ENCODE measurements at regions of chr9 and their contacts with region 1.

Region 1: DNA sequence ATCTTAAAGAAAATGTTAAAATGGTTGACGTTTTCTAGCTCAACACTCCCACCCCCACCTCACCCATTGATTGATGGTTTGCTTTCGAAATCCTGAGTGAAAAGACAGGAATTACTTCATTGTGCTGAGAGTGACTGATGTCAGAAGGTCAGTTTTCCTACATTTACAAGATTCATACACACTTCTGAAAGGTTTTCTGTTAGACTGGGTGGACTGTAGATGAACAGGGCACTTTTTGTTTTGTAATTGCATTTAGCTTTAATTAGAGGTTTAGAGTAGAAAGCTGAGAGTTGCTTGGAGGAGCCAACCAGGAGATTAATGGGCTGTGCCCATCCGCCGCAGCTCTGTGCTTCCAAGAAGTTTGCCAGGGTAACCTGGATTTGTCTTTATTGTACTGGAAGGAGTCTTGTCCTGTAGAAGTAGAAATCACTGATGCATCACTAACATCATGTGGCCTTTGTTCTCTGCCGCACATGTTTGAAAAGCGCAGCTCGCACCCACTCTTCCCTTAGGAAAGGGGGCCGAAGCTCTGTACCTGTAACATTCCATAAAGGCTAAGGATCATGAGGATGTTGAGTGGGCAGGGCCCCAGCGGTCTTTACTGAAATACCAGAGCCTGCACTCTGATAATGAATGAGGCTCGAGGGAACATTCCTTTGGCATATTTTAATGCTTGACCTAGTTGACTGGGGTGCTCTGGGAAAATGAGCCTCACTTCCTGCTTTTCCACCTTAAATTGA is 267.7 kb upstream of the DMRT1 start:
- DNase-seq: no peak
- ATAC-seq: no peak
- H3K4me3 ChIP-seq: no peak overlapping the region
- H3K4me3 Mint-ChIP-seq: no peak overlapping the region
- H3K27ac ChIP-seq: no peak overlapping the region
- H3K27ac Mint-ChIP-seq: no peak overlapping the region
- H3K4me1 ChIP-seq: no peaks in the 10 kb centered on the region
- H3K4me1 Mint-ChIP-seq: no peaks in the 10 kb centered on the region
- H3K27me3 ChIP-seq: no peaks in the 10 kb centered on the region
- H3K27me3 Mint-ChIP-seq: peaks cover 5% of the 10 kb centered on the region
- CTCF ChIP-seq: no peak

Region 2: GRCh38 chr9:517993-518392 is 55.8 kb before region 1 on chr9:
- CTCF ChIA-PET with region 1: no interaction called
- POLR2A ChIA-PET with region 1: no interaction called
- intact Hi-C with region 1: loop called in 1 of 2 experiments (anchors 10 kb)
- DNase-seq: no peak
- ATAC-seq: no peak
- H3K4me3 ChIP-seq: no peak overlapping the region
- H3K4me3 Mint-ChIP-seq: peak overlapping the region; percentile 80
- H3K27ac ChIP-seq: no peak overlapping the region
- H3K27ac Mint-ChIP-seq: peak overlapping the region; percentile 91
- H3K4me1 ChIP-seq: peaks cover 31% of the 10 kb centered on the region
- H3K4me1 Mint-ChIP-seq: peaks cover 35% of the 10 kb centered on the region
- H3K27me3 ChIP-seq: no peaks in the 10 kb centered on the region
- H3K27me3 Mint-ChIP-seq: no peaks in the 10 kb centered on the region
- CTCF ChIP-seq: no peak

Region 3: DNA sequence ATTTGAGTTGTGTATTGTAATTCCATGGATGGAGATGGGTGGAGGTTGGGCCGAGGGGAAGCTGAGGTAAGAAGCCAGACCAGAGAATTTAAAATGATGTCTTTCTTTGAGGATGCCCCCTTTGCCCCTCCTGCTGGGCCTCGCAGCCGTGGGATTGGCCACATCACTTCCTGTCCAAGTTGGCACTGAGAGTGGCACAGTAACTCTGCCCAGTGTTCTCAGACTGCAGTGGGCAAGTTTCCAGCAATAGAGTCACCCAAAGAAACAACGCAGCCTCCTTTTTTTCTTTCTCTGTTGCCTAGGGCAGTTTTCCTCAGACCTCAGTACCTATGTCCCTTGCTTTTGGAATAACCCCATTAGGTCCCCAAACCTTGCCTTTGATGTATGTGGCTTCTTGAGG is 39.0 kb before region 1 on chr9:
- CTCF ChIA-PET with region 1: no interaction called
- POLR2A ChIA-PET with region 1: no interaction called
- intact Hi-C with region 1: no loop called
- DNase-seq: no peak
- ATAC-seq: no peak
- H3K4me3 ChIP-seq: no peak overlapping the region
- H3K4me3 Mint-ChIP-seq: no peak overlapping the region
- H3K27ac ChIP-seq: no peak overlapping the region
- H3K27ac Mint-ChIP-seq: no peak overlapping the region
- H3K4me1 ChIP-seq: peaks cover 6% of the 10 kb centered on the region
- H3K4me1 Mint-ChIP-seq: peaks cover 3% of the 10 kb centered on the region
- H3K27me3 ChIP-seq: no peaks in the 10 kb centered on the region
- H3K27me3 Mint-ChIP-seq: peaks cover 11% of the 10 kb centered on the region
- CTCF ChIP-seq: no peak

Region 4: DNA sequence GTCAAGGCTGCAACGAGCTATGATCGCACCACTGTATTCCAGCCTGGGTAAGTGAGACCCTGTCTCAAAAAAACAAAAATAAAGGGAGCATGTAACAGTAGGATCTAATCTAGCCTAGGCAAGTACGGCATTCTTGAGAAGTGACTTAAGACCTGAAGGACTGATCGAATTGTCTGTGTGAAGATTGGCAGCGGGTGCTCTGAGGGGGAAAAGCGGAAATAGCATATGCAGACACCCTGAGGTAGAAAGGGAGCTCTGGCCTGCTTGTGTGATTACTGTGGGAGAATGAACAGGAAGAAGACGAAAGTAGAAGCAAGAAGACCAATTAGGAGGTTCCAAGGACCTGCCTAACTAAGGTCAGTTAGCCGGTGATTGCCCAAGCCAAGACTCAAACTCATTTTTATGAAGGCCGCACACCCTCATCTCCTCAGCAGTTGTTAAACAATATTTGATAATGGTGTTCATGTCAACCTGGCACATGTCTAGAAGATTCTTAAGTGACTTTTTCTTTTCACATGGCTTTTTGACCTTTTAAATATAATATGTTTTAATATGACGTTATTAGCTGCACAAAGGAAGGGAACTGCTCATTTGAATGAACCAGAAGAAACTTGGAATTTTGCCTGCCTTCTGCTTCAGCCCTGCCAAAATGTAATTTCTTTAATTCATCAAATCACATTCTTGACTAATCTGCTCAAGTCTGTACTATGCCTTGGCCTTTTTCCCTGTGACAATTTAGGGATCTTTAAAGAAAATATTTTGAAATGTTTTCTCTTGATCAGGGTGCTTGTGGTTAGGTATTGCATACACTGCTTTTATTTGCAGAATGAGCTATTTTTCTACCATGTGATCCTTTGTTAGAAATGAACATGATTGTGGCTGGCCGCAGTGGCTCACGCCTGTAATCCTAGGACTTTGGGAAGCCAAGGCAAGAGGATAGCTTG is 21.6 kb before region 1 on chr9:
- CTCF ChIA-PET with region 1: no interaction called
- POLR2A ChIA-PET with region 1: no interaction called
- intact Hi-C with region 1: no loop called
- DNase-seq: no peak
- ATAC-seq: no peak
- H3K4me3 ChIP-seq: no peak overlapping the region
- H3K4me3 Mint-ChIP-seq: no peak overlapping the region
- H3K27ac ChIP-seq: no peak overlapping the region
- H3K27ac Mint-ChIP-seq: no peak overlapping the region
- H3K4me1 ChIP-seq: no peaks in the 10 kb centered on the region
- H3K4me1 Mint-ChIP-seq: peaks cover 5% of the 10 kb centered on the region
- H3K27me3 ChIP-seq: peaks cover 0 to 3% of the 10 kb centered on the region in 2 experiments
- H3K27me3 Mint-ChIP-seq: peaks cover 15% of the 10 kb centered on the region
- CTCF ChIP-seq: no peak

Region 5: GRCh38 chr9:589723-590122 is 15.9 kb after region 1 on chr9:
- CTCF ChIA-PET with region 1: no interaction called
- POLR2A ChIA-PET with region 1: no interaction called
- intact Hi-C with region 1: no loop called
- DNase-seq: no peak
- ATAC-seq: no peak
- H3K4me3 ChIP-seq: no peak overlapping the region
- H3K4me3 Mint-ChIP-seq: no peak overlapping the region
- H3K27ac ChIP-seq: no peak overlapping the region
- H3K27ac Mint-ChIP-seq: no peak overlapping the region
- H3K4me1 ChIP-seq: no peaks in the 10 kb centered on the region
- H3K4me1 Mint-ChIP-seq: no peaks in the 10 kb centered on the region
- H3K27me3 ChIP-seq: no peaks in the 10 kb centered on the region
- H3K27me3 Mint-ChIP-seq: no peaks in the 10 kb centered on the region
- CTCF ChIP-seq: no peak